CD4-positive, alpha-beta memory T cell (primary cell): ENCODE measurements at regions of chr4 and their contacts with region 1.

Region 1: DNA sequence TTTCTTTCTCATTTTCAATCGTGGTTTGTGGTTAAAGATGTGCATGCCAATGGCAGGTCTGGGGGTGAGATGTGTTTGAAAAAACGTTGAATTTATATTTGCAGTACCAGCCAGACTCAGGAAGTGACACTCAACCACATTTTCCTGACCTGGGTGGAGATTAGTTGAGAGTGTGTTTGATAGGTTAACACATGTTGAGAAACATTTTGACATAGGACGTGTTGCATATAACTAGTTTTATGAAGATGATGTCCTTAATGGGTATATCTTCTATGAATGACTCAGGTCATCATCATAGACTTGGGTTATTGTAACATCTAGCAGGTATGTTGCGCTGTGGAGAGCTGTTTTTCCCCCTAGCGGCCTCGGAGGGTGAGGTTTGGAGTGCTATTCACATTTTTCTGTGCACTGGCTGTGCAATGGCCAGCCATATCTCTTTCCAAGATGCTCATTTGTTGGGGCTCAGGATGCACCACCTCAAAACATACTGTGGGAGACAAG is 21.7 kb upstream of the CD38 start:
- DNase-seq: peak; percentile 85 to 93 (median 86)
- H3K4me3 ChIP-seq: peak overlapping the region in 1 of 2 donors; percentile 46
- H3K4me3 Mint-ChIP-seq: peak overlapping the region; percentile 46 to 81 (median 74)
- H3K27ac ChIP-seq: peak overlapping the region; percentile 19
- H3K27ac Mint-ChIP-seq: peak overlapping the region; percentile 73 to 95 (median 89)
- H3K4me1 ChIP-seq: peaks cover 45% of the 10 kb centered on the region
- H3K4me1 Mint-ChIP-seq: peaks cover 40 to 49% (median 42%) of the 10 kb centered on the region in 4 donors
- H3K27me3 ChIP-seq: no peaks in the 10 kb centered on the region
- H3K27me3 Mint-ChIP-seq: no peaks in the 10 kb centered on the region

Region 2: DNA sequence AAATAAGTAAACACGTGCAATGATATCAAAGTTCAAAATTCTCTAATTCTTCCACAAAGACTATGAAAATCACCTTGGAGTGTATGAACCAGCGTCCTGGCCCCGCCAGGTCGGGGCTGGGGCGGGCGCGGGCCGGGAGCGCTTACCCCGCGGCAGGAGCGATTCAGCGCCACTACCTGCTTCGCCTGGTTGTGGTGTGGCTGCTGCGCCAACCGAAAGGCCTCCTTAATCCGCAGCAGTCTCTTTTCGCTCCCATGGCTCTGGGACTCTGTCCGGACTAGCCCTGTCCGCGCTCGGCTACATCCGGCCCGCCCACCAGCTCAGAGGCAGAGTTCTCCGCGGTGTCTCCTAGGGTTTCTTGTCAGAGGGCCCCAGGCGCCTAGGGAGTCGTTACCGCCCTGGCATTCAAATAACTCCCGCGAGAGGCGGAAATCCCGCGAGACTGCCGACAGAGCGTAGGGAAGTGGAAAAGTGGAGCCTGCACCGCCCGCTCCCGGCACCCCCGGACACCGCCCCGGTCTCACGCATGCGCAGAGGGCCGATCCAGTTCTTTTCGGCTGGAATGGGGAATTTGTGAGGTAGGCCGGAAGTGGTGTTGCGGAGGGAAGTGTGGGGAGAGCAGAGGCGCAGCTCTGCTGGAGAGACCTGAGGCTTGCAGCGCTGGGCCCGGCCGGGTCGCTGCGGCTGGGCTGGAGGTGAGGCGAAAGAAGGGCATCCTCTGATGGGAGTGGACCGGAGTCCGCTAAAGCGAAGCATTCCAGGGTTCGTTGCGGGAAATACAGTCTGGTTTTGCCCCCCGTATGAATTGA is 75.0 kb before region 1 on chr4 and contains the start of gene FAM200B:
- CTCF ChIA-PET with region 1: no interaction called
- POLR2A ChIA-PET with region 1: interaction called, 10 read pairs
- intact Hi-C with region 1: loop called (anchors 5 kb)
- DNase-seq: peak; percentile 92 to 96 (median 93)
- H3K4me3 ChIP-seq: peak within 1 kb of the TSS; percentile 72 to 99
- H3K4me3 Mint-ChIP-seq: peak within 1 kb of the TSS; percentile 90 to 98 (median 96)
- H3K27ac ChIP-seq: peak within 1 kb of the TSS; percentile 70
- H3K27ac Mint-ChIP-seq: peak within 1 kb of the TSS; percentile 86 to 98 (median 97)
- H3K4me1 ChIP-seq: peaks cover 30% of the 10 kb centered on the region
- H3K4me1 Mint-ChIP-seq: peaks cover 26 to 46% (median 34%) of the 10 kb centered on the region in 4 donors
- H3K27me3 ChIP-seq: no peaks in the 10 kb centered on the region
- H3K27me3 Mint-ChIP-seq: no peaks in the 10 kb centered on the region
- total RNA-seq, gene FAM200B: 35.5 to 37.4 TPM

Region 3: DNA sequence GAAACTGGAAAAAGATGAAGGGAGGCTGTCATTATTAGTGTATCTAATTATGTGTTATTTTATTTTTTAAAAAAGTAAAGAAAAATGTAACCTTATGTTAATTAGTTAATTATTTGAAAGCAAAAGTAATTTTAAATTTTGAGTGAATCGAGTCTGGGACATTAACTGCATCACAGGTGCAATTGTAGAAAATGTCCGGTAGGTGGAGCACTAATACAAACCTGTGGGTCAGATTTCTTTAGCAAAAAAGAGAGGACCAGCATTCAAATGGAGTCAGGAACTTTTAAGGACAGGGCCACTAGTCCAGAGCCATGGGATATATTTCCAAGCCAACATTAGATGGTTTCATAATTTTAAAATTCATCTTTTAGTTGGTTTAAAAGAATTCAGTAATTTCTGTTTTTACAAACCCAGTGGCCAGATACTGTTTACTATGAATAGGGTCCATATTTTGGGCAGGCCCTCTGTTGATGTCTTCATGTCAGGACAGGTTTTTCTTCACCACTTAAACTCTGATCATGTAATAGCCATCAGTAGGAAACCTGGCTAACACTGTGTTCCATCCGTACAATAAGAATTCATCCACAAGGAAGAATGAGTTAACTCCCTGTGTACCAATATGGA is 26.4 kb before region 1 on chr4:
- CTCF ChIA-PET with region 1: interaction called, 28 read pairs
- POLR2A ChIA-PET with region 1: no interaction called
- intact Hi-C with region 1: loop called (anchors 1 kb)
- DNase-seq: peak in 4 of 5 donors; percentile 46 to 60 (median 54)
- H3K4me3 ChIP-seq: no peak overlapping the region
- H3K4me3 Mint-ChIP-seq: no peak overlapping the region
- H3K27ac ChIP-seq: no peak overlapping the region
- H3K27ac Mint-ChIP-seq: no peak overlapping the region
- H3K4me1 ChIP-seq: peaks cover 3% of the 10 kb centered on the region
- H3K4me1 Mint-ChIP-seq: peaks cover 4 to 11% (median 8%) of the 10 kb centered on the region in 4 donors
- H3K27me3 ChIP-seq: no peaks in the 10 kb centered on the region
- H3K27me3 Mint-ChIP-seq: peaks cover 1 to 2% of the 10 kb centered on the region in 2 donors

Region 4: GRCh38 chr4:15778289-15779241 is 22.2 kb after region 1 on chr4 and contains the start of gene CD38:
- CTCF ChIA-PET with region 1: interaction called, 9 read pairs
- POLR2A ChIA-PET with region 1: interaction called, 4 read pairs
- intact Hi-C with region 1: loop called (anchors 1 kb)
- DNase-seq: peak in 4 of 5 donors; percentile 33 to 51 (median 45)
- H3K4me3 ChIP-seq: peak within 1 kb of the TSS; percentile 48
- H3K4me3 Mint-ChIP-seq: peak within 1 kb of the TSS; percentile 78 to 91 (median 88)
- H3K27ac ChIP-seq: no peak within 1 kb of the TSS
- H3K27ac Mint-ChIP-seq: peak within 1 kb of the TSS in 5 of 7 donors; percentile 20 to 79 (median 47)
- H3K4me1 ChIP-seq: peaks cover 34% of the 10 kb centered on the region
- H3K4me1 Mint-ChIP-seq: peaks cover 29 to 50% (median 40%) of the 10 kb centered on the region in 4 donors
- H3K27me3 ChIP-seq: no peaks in the 10 kb centered on the region
- H3K27me3 Mint-ChIP-seq: peaks cover 0 to 2% of the 10 kb centered on the region in 2 donors
- total RNA-seq, gene CD38: 1.00 to 1.7 TPM

Region 5: DNA sequence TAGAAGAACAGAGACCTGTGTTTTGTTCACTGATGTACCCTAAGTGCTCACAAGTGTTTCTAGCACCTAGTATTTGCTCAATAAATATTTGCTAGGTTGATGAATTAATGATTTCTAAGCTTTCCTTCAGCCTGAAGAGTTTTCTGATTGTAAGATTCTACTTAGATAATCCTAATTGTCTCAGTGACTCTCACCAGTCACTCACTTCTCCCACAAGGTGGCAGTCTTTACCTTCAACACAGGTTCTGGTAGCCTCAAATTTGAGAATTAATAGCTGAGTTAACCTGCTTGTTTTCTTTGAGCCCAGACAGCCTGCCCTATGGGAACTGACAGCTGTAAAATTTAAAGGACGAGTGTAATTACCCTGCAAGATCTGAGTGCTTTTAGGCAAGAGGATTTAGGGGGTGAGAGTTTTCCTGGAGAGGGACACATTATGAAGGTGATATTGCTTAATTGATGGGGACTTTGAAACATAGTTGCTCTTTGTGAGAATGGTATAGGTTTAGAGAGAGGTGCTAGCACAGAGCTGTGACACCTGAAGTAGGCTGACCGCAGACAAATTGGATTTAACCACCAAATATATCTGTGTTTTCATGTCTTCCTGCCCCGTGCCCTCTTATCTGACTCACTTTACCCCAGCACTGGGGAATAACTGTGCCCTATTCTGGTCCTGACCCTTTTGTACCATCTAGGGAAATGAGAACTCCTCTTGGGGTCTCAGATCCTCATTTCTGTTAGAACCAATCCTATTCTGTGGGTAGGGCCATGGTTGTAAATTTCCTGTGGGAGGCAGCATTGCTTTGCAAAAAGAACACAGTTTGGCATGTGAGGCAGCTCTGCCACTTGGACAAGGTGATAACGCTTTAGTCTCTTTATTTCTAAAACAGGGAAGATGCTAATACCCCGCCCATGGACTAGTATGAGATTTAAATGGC is 49.4 kb after region 1 on chr4:
- CTCF ChIA-PET with region 1: interaction called, 17 read pairs
- POLR2A ChIA-PET with region 1: interaction called, 4 read pairs
- intact Hi-C with region 1: loop called (anchors 1 kb)
- DNase-seq: peak in 4 of 5 donors; percentile 43 to 53 (median 50)
- H3K4me3 ChIP-seq: no peak overlapping the region
- H3K4me3 Mint-ChIP-seq: no peak overlapping the region
- H3K27ac ChIP-seq: no peak overlapping the region
- H3K27ac Mint-ChIP-seq: no peak overlapping the region
- H3K4me1 ChIP-seq: peaks cover 7% of the 10 kb centered on the region
- H3K4me1 Mint-ChIP-seq: peaks cover 9 to 11% (median 9%) of the 10 kb centered on the region in 4 donors
- H3K27me3 ChIP-seq: no peaks in the 10 kb centered on the region
- H3K27me3 Mint-ChIP-seq: peaks cover 0 to 3% of the 10 kb centered on the region in 2 donors